Activated CD8-positive, alpha-beta memory T cell treated with anti-CD3 and anti-CD28 coated beads, Interleukin-2, amount 10 ng/mL, durations not matched to agents 7 days and 5 days (primary cell): ENCODE measurements at regions of chr1 and their contacts with region 1.

Region 1: DNA sequence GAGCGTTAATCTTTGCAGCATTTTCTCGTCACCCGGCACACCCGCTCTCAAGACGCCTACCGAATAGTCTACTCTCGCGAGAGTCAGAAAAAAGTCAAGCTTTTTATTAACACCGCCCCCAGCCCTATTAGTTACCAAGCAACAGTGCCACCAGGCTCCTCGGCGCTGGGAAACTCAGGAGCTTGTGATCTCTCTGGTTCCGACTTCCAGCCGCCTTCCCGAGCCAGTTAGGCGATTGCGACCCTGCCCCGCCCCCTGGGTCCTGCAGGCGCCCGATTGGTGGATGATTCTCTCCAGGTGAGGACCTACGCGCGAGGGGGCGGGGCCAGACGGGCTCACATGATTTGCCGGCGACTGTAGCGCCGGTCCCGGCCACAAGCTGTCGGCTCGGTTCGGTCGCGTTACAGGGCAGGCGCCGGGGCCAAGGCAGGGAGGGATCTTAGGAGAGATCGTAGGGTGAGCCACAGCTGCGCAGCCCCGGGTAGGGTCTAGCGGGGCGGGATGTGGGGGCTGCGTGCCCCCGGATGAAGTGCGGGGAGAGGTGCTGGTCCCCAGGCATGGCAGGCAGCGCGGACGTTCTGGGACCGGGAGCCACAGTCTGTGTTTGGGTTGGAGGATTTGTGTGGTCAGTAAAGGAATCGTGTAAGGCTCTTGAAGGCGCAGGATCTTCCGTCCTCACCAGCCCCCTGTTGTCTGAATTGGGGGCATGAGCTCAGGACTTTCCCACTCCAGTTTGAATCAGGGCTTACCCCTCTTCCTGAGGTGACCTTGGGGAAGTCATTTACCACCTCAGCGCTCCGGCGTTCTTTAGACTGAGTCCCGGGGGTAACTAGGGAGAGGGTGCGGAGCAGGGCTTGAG is at the start of gene PFKFB2:
- DNase-seq: peak; percentile 95
- ATAC-seq: peak; percentile 90
- H3K4me3 Mint-ChIP-seq: peak within 1 kb of the TSS; percentile 93
- H3K27ac Mint-ChIP-seq: peak within 1 kb of the TSS; percentile 82
- H3K4me1 Mint-ChIP-seq: peaks cover 37% of the 10 kb centered on the region
- H3K27me3 Mint-ChIP-seq: peaks cover 5% of the 10 kb centered on the region
- total RNA-seq, gene PFKFB2: 2.3 TPM

Region 2: GRCh38 chr1:206575165-206575893 is 477.8 kb before region 1 on chr1:
- CTCF ChIA-PET with region 1: no interaction called
- DNase-seq: peak; percentile 80
- ATAC-seq: peak; percentile 54
- H3K4me3 Mint-ChIP-seq: peak overlapping the region; percentile 70
- H3K27ac Mint-ChIP-seq: peak overlapping the region; percentile 95
- H3K4me1 Mint-ChIP-seq: peaks cover 96% of the 10 kb centered on the region
- H3K27me3 Mint-ChIP-seq: no peaks in the 10 kb centered on the region

Region 3: GRCh38 chr1:207002731-207003146 is 50.4 kb before region 1 on chr1:
- CTCF ChIA-PET with region 1: no interaction called
- DNase-seq: no peak
- ATAC-seq: no peak
- H3K4me3 Mint-ChIP-seq: no peak overlapping the region
- H3K27ac Mint-ChIP-seq: no peak overlapping the region
- H3K4me1 Mint-ChIP-seq: no peaks in the 10 kb centered on the region
- H3K27me3 Mint-ChIP-seq: peaks cover 21% of the 10 kb centered on the region

Region 4: DNA sequence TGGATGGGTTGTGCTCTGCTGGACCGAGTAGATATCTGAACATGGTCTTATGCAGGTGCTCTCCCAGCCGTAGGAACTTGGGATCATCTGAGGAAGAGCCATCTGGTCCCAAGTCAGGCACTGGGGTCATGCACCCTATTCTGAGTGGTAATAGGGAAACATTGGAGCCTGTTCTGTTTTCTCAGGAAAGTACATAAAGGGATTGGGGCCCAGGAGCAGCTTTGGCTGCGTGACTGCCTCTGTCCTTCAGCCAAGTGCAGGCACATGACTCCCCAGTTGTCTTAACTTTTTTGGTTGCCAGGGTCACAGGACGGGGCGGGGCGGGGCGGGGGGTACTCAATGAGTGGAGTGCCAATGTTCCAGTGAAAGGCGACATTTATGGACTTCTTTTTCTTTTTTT is 11.4 kb after region 1 on chr1:
- CTCF ChIA-PET with region 1: interaction called, 18 read pairs
- DNase-seq: no peak
- ATAC-seq: no peak
- H3K4me3 Mint-ChIP-seq: no peak overlapping the region
- H3K27ac Mint-ChIP-seq: no peak overlapping the region
- H3K4me1 Mint-ChIP-seq: peaks cover 6% of the 10 kb centered on the region
- H3K27me3 Mint-ChIP-seq: no peaks in the 10 kb centered on the region

Region 5: DNA sequence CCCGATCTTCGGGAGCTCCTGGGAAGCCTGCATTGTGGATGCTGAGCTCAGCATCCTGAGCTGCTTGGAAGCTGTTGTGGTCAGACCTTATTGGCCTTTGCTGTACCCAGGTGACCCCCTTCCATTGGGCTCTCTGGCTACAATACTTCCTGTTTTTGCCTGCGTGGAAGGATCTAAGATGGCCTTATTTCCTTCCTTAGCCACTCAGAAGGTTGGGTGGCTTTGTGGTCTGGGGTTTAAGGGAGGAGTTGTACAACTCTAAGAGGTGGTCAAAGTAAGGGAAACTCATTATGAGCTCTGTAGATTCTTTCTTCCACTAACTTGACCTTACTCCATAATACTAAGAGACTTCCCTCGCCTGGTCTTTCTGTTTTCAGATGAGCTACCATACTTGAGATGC is 17.7 kb after region 1 on chr1:
- CTCF ChIA-PET with region 1: interaction called, 18 read pairs
- DNase-seq: peak; percentile 80
- ATAC-seq: peak; percentile 77
- H3K4me3 Mint-ChIP-seq: no peak overlapping the region
- H3K27ac Mint-ChIP-seq: peak overlapping the region; percentile 65
- H3K4me1 Mint-ChIP-seq: peaks cover 28% of the 10 kb centered on the region
- H3K27me3 Mint-ChIP-seq: peaks cover 2% of the 10 kb centered on the region

Region 6: GRCh38 chr1:207077470-207078377 is 24.6 kb after region 1 on chr1:
- CTCF ChIA-PET with region 1: interaction called, 27 read pairs
- DNase-seq: peak; percentile 76
- ATAC-seq: peak; percentile 87
- H3K4me3 Mint-ChIP-seq: no peak overlapping the region
- H3K27ac Mint-ChIP-seq: no peak overlapping the region
- H3K4me1 Mint-ChIP-seq: peaks cover 2% of the 10 kb centered on the region
- H3K27me3 Mint-ChIP-seq: peaks cover 24% of the 10 kb centered on the region